ENCODE measurements at regions of chr13 and their contacts with region 1.

Region 1: GRCh38 chr13:39616087-39616694 is 13.2 kb upstream of the LHFPL6 start:
- DNase-seq: peak; percentile 73
- CTCF ChIP-seq: peak; percentile 77

Region 2: DNA sequence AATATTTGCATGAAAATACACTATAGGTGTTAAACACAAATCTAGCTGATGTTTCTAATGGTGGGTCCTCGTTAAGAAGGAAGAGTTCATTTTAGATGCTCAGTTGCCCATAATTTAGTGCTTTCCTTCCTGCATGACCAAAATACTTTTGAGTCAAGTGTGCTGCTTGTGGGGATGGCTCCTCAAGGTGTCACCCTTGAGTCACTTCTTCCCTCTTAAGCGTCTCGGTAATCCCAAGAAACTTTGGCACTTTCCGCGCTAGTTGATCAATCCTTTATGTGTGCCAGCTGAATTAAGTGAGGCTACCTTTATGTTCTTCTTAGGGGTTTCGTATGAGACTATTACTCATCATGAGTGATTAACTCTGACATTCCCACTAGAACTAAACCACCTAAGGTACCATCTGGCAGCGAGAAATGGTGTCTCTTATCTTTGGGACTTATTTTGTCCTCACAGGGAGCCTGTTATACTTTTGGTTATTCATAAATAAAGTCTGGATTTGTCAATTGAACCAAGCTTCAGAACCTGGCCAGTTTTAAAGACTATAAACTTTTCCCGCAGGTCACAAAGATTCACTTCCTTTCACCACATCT is 471.2 kb before region 1 on chr13:
- CTCF ChIA-PET with region 1: interaction called, 48 read pairs
- POLR2A ChIA-PET with region 1: no interaction called
- DNase-seq: peak; percentile 49
- CTCF ChIP-seq: peak; percentile 74

Region 3: DNA sequence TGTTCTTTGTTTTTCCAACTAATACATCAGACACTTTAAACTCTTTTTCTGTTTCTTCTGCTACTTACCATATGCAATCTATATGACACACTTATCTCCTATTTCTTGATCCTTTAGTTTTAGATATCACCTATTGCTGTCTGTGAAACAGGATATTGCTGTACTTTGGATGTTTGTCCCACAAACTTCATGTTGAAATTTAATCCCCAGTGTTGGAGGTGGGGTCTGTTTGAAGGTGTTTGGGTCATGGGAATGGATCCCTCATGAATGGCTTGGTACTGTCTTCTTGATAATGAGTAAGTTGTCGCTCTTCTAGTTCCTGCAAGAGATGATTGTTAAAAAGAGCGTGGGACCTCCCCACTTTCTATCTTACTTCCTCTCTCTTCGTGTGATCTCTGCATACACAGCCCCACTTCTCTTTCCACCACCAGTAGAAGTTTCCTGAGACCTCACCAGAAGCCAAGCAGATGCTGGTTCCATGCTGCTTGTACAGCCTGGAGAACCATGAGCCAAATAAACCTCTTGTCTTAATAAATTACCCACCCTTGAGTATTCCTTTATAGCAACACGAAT is 333.7 kb before region 1 on chr13:
- CTCF ChIA-PET with region 1: interaction called, 12 read pairs
- POLR2A ChIA-PET with region 1: no interaction called
- DNase-seq: peak; percentile 38
- CTCF ChIP-seq: no peak

Region 4: GRCh38 chr13:39602614-39603366 is 13.4 kb before region 1 on chr13 and contains the start of gene LHFPL6:
- CTCF ChIA-PET with region 1: interaction called, 42 read pairs
- POLR2A ChIA-PET with region 1: no interaction called
- DNase-seq: peak; percentile 87
- CTCF ChIP-seq: peak; percentile 25

Region 5: DNA sequence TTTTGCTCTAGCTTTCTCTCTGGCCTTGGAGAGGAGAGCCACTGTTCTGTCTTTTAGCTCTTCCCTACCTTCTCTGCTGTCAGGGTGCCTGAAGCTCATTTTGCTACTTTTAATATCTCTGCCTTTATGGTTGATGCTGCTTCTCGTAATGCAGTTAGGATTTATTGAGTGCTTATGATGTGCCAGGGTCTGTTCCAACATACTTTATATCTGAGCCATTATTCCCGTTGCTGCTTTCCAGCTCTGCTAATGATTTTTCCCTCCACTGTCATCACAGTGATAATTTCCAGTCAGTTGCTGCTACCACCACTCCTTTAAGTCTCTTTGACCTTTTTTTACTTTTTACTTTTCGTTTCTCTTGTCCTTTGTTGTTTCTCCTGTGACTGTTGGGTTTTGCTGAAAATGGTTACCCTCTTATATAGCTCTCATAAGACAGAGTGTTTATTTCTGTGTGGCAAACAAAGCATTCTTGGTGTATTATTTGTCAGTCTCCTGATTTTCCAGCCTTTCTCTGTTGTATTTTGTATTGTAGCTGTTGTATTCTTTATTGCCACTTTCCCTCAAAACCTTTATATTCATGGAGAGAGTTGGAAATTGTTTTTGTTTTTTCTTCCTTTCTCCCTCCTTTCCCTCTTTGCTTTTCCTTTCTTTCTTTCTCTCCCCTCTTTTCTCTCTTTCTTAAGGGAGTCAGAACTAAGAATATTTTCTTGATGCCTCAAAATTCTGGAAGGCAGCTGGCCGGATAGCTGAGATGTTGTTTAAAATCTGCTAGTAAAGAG is 76.7 kb after region 1 on chr13:
- CTCF ChIA-PET with region 1: no interaction called
- POLR2A ChIA-PET with region 1: no interaction called
- DNase-seq: no peak
- CTCF ChIP-seq: no peak

Region 6: GRCh38 chr13:39956036-39956435 is 339.8 kb after region 1 on chr13:
- CTCF ChIA-PET with region 1: no interaction called
- POLR2A ChIA-PET with region 1: no interaction called
- DNase-seq: peak; percentile 28
- CTCF ChIP-seq: no peak